BJ (cell line): ENCODE measurements at regions of chr10 and their contacts with region 1.

Region 1: GRCh38 chr10:91573320-91573719 is 59.6 kb downstream of the PPP1R3C start:
- DNase-seq: no peak
- H3K4me3 ChIP-seq: no peak overlapping the region
- H3K27me3 ChIP-seq: no peaks in the 10 kb centered on the region
- CTCF ChIP-seq: no peak

Region 2: GRCh38 chr10:90658791-90659190 is 914.5 kb before region 1 on chr10:
- CTCF ChIA-PET with region 1: no interaction called
- POLR2A ChIA-PET with region 1: no interaction called
- DNase-seq: no peak
- H3K4me3 ChIP-seq: no peak overlapping the region
- H3K27me3 ChIP-seq: no peaks in the 10 kb centered on the region
- CTCF ChIP-seq: peak; percentile 30

Region 3: GRCh38 chr10:91162050-91162494 is 411.2 kb before region 1 on chr10:
- CTCF ChIA-PET with region 1: no interaction called
- POLR2A ChIA-PET with region 1: interaction called, 10 read pairs
- DNase-seq: no peak
- H3K4me3 ChIP-seq: peak overlapping the region; percentile 75
- H3K27me3 ChIP-seq: no peaks in the 10 kb centered on the region
- CTCF ChIP-seq: no peak